CD8-positive, alpha-beta T cell (primary cell): ENCODE measurements at regions of chr11 and their contacts with region 1.

Region 1: DNA sequence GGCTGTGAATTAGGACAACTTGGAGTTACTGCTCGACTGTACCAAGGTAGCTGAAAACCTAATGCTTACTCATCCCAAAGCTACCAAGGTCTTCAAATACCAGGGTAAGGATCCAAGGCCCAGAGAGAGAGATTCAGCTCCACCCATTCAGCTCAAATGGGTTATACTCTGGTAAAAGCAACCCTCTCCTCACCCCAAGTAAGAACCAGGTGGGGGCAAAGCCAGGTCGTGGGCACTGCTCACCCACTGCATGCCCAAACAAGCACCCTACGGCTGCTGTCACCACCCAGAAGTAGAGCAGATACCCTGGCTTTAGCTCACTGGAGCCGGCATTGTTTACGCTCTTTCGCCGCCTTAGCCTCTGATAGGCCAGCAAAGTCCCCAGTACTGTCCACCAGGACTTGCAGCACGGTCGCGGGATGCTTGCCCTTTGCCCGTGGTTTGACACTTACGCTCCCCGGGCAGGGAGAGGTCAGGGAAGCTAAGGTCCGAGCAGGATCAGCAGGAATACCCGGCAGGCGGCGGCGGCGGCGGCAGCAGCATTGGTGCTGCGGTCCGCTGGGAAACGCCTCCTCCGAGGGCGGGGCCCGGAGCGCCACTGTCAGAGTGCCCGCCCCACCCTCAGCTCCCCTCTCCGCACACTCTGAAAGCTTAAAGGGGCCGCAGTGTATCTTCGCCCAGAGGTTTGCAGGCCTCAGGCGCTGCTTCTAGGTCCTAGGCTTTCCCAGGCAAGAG is 19.6 kb downstream of the CKAP5 start:
- DNase-seq: peak; percentile 41 to 82 (median 75)
- ATAC-seq: peak; percentile 100
- H3K4me3 ChIP-seq: peak overlapping the region; percentile 57 to 60
- H3K4me3 Mint-ChIP-seq: peak overlapping the region; percentile 84
- H3K27ac ChIP-seq: no peak overlapping the region
- H3K27ac Mint-ChIP-seq: peak overlapping the region; percentile 32
- H3K4me1 ChIP-seq: peaks cover 16% of the 10 kb centered on the region
- H3K4me1 Mint-ChIP-seq: peaks cover 34% of the 10 kb centered on the region
- H3K27me3 ChIP-seq: no peaks in the 10 kb centered on the region
- H3K27me3 Mint-ChIP-seq: no peaks in the 10 kb centered on the region
- CTCF ChIP-seq: no peak

Region 2: DNA sequence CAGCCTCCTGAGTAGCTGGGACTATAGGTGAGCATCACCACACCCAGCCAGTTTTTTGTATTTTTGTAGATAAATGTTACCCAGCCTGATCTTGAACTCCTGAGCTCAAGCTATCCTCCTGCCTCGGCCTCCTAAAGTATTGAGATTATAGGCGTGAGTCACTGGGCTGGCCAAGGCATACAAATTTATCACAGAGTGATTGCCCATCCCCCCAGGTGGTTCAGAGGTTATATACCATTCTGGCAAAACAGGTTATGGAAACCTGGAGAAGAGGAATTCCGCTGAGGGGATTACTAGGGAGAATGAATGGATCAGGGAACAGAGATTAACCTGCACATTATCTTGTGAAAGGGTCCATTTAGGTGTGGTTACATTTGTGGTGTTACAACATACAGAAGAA is 201.1 kb before region 1 on chr11:
- CTCF ChIA-PET with region 1: no interaction called
- POLR2A ChIA-PET with region 1: no interaction called
- intact Hi-C with region 1: no loop called
- DNase-seq: no peak
- ATAC-seq: no peak
- H3K4me3 ChIP-seq: no peak overlapping the region
- H3K4me3 Mint-ChIP-seq: no peak overlapping the region
- H3K27ac ChIP-seq: no peak overlapping the region
- H3K27ac Mint-ChIP-seq: no peak overlapping the region
- H3K4me1 ChIP-seq: peaks cover 4% of the 10 kb centered on the region
- H3K4me1 Mint-ChIP-seq: peaks cover 45% of the 10 kb centered on the region
- H3K27me3 ChIP-seq: no peaks in the 10 kb centered on the region
- H3K27me3 Mint-ChIP-seq: no peaks in the 10 kb centered on the region
- CTCF ChIP-seq: no peak

Region 3: DNA sequence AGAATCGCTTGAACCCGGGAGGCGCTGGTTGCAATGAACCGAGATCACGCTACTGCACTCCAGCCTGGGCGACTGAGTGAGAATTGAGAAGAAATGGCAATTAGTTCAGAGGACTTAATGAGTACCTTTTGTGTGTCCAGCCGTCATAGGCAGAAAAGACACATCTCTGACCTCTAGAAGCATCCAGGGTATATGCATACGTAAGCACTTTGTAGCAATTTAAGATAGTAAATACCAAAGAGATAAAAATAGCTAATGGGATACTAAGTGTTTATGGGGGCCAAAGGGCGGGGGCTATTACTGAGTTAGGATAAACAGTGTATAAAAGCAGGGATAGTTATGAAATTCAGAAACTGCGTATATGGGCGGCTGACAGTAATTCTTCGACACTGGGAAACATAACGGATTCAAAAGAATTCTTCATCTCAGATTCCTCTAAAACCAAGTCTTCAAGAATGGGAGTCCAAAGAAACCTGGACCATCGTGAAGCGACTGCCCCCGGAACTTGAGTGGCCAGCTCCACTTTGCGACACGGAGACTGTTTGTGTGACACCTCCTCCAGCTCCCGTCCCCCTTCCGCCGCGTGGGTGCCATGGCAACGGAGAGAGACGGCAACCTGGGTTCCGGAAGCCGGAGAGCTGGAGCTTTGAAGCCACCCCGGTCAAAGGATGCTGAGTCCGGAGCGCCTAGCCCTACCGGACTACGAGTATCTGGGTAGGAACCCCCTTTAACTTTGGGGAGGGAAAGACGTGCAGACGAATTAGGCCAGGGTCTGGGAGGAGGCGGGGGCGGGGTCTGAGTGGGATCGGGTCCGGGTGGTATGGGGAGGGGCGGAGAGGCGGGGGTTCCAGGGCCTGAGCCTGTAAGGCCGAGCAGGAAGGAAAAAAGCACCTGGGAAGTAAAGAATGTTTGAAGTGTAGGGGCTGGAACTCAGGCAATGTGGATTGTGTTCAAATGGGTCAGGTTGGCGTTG is 109.9 kb after region 1 on chr11 and contains the start of gene CSTPP1:
- CTCF ChIA-PET with region 1: no interaction called
- POLR2A ChIA-PET with region 1: no interaction called
- intact Hi-C with region 1: loop called in 1 of 2 experiments (anchors 1 kb)
- DNase-seq: peak; percentile 80 to 97 (median 93)
- ATAC-seq: peak; percentile 96
- H3K4me3 ChIP-seq: peak within 1 kb of the TSS; percentile 73 to 82
- H3K4me3 Mint-ChIP-seq: peak within 1 kb of the TSS; percentile 97
- H3K27ac ChIP-seq: peak within 1 kb of the TSS; percentile 58 to 71
- H3K27ac Mint-ChIP-seq: peak within 1 kb of the TSS; percentile 95
- H3K4me1 ChIP-seq: peaks cover 9% of the 10 kb centered on the region
- H3K4me1 Mint-ChIP-seq: peaks cover 20% of the 10 kb centered on the region
- H3K27me3 ChIP-seq: no peaks in the 10 kb centered on the region
- H3K27me3 Mint-ChIP-seq: peaks cover 6% of the 10 kb centered on the region
- CTCF ChIP-seq: no peak
- total RNA-seq, gene CSTPP1: 4.1 to 4.6 TPM